B cell (primary cell): ENCODE measurements at regions of chr9 and their contacts with region 1.

Region 1: GRCh38 chr9:104774831-104775573 is 11.1 kb downstream of the NIPSNAP3B start:
- DNase-seq: peak; percentile 86
- ATAC-seq: peak; percentile 90
- H3K4me3 ChIP-seq: peak overlapping the region in 4 of 5 experiments; percentile 3 to 48 (median 36)
- H3K4me3 Mint-ChIP-seq: no peak overlapping the region
- H3K27ac ChIP-seq: peak overlapping the region; percentile 77 to 81
- H3K27ac Mint-ChIP-seq: no peak overlapping the region
- H3K4me1 ChIP-seq: peaks cover 38 to 43% of the 10 kb centered on the region in 2 donors
- H3K4me1 Mint-ChIP-seq: peaks cover 34% of the 10 kb centered on the region
- H3K27me3 ChIP-seq: no peaks in the 10 kb centered on the region
- H3K27me3 Mint-ChIP-seq: no peaks in the 10 kb centered on the region
- CTCF ChIP-seq: no peak

Region 2: GRCh38 chr9:104758974-104759373 is 16.0 kb before region 1 on chr9:
- CTCF ChIA-PET with region 1: interaction called, 8 read pairs
- POLR2A ChIA-PET with region 1: interaction called, 9 read pairs
- intact Hi-C with region 1: loop called (anchors 1 kb)
- DNase-seq: no peak
- ATAC-seq: peak; percentile 39
- H3K4me3 ChIP-seq: no peak overlapping the region
- H3K4me3 Mint-ChIP-seq: no peak overlapping the region
- H3K27ac ChIP-seq: peak overlapping the region in 1 of 2 donors; percentile 19
- H3K27ac Mint-ChIP-seq: peak overlapping the region; percentile 60
- H3K4me1 ChIP-seq: peaks cover 0 to 4% of the 10 kb centered on the region in 2 donors
- H3K4me1 Mint-ChIP-seq: peaks cover 15% of the 10 kb centered on the region
- H3K27me3 ChIP-seq: no peaks in the 10 kb centered on the region
- H3K27me3 Mint-ChIP-seq: no peaks in the 10 kb centered on the region
- CTCF ChIP-seq: no peak